ENCODE measurements at regions of chr6 and their contacts with region 1.

Region 1: GRCh38 chr6:53300656-53301551 is 47.8 kb downstream of the ELOVL5 start:
- DNase-seq: peak; percentile 43 to 68
- ATAC-seq: peak; percentile 66 to 76 (median 74)
- H3K4me3 ChIP-seq: no peak overlapping the region
- H3K4me3 Mint-ChIP-seq: peak overlapping the region; percentile 83
- H3K27ac ChIP-seq: peak overlapping the region; percentile 26
- H3K27ac Mint-ChIP-seq: peak overlapping the region; percentile 80 to 84
- H3K4me1 ChIP-seq: peaks cover 38% of the 10 kb centered on the region
- H3K4me1 Mint-ChIP-seq: peaks cover 73 to 75% of the 10 kb centered on the region in 2 donors
- H3K27me3 ChIP-seq: no peaks in the 10 kb centered on the region
- H3K27me3 Mint-ChIP-seq: no peaks in the 10 kb centered on the region
- CTCF ChIP-seq: no peak

Region 2: DNA sequence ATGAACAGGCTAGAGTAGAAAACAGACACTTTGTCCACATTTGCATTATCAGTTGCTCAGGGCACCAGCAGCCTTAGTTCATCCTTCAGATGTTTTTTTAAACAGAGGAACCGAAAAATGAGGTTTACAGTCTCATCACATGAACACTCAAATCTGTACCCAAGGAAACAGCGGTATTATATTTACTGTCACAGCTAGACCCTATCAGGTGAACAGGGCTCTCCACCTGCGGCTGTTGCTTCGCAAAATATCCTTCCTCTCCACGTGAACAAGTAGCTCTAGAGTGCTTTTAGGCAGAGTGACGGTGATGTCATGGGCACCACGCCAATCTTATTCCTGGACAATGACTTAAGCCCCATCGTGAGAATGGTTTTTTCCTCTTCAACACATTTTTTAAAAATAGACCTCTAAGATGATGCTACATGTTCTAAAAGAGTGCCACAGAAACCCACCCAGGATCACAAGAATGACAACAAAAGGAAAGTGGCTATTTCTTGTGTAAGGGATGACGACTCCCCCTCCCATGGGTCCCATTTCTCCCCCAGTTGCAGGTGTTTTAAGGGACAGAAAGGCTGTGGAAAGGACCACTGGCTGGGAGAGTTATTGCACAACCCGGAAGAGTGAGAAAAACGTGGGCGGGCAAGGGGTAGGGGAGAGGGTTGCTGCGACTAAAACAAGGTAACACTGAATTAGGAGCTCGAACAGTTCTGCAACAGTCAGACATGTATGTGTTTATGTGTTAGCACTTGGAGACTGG is 803.1 kb before region 1 on chr6:
- intact Hi-C with region 1: no loop called
- DNase-seq: no peak
- ATAC-seq: peak in 1 of 3 donors; percentile 33
- H3K4me3 ChIP-seq: no peak overlapping the region
- H3K4me3 Mint-ChIP-seq: no peak overlapping the region
- H3K27ac ChIP-seq: peak overlapping the region; percentile 75
- H3K27ac Mint-ChIP-seq: no peak overlapping the region
- H3K4me1 ChIP-seq: peaks cover 8% of the 10 kb centered on the region
- H3K4me1 Mint-ChIP-seq: peaks cover 11 to 13% of the 10 kb centered on the region in 2 donors
- H3K27me3 ChIP-seq: no peaks in the 10 kb centered on the region
- H3K27me3 Mint-ChIP-seq: no peaks in the 10 kb centered on the region
- CTCF ChIP-seq: no peak

Region 3: GRCh38 chr6:53313784-53314400 is 13.0 kb after region 1 on chr6:
- intact Hi-C with region 1: loop called (anchors 1 kb)
- DNase-seq: no peak
- ATAC-seq: no peak
- H3K4me3 ChIP-seq: no peak overlapping the region
- H3K4me3 Mint-ChIP-seq: peak overlapping the region; percentile 4
- H3K27ac ChIP-seq: no peak overlapping the region
- H3K27ac Mint-ChIP-seq: peak overlapping the region; percentile 60
- H3K4me1 ChIP-seq: peaks cover 40% of the 10 kb centered on the region
- H3K4me1 Mint-ChIP-seq: peaks cover 80 to 90% of the 10 kb centered on the region in 2 donors
- H3K27me3 ChIP-seq: no peaks in the 10 kb centered on the region
- H3K27me3 Mint-ChIP-seq: no peaks in the 10 kb centered on the region
- CTCF ChIP-seq: no peak

Region 4: DNA sequence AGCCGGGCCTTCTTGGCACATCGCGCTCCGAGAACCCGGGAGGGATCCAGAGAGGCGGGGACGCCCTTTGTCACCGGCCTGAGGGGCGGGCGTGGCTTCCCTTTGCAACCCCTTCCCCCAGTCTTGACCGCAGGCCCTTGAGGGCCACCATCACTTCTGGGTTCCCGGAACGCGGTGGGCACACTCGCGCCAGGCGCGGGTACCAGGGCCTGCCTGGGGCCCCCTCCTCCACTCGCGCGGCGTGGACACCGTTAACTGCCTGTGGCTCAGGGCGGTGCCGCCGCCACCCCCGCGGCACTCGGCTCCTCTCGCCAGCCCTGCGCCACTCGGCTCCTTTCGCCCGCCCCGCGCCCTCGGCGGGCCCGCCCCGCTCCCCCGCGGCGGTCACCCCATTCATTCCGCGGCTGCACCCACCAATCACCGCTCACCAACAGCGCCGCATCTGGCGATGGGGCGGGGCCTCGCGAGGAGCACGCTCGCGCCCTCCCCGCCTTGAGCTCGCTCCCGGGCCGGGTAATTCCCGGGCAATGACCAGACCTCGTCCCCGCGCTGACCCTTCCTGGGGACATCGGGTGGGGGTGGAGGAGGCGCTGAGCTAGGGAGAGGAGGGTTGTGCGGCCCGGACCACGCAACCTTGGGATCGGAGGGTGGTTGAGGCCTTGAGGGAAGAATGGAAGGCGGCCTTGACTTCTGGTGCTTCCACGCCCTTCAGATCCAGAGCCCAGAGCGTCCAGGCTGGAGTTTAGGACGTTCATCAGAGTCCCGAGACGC is 58.4 kb after region 1 on chr6:
- intact Hi-C with region 1: loop called (anchors 5 kb)
- DNase-seq: peak; percentile 92 to 94
- ATAC-seq: peak; percentile 87 to 96 (median 94)
- H3K4me3 ChIP-seq: peak overlapping the region; percentile 64
- H3K4me3 Mint-ChIP-seq: peak overlapping the region; percentile 93
- H3K27ac ChIP-seq: peak overlapping the region; percentile 95
- H3K27ac Mint-ChIP-seq: peak overlapping the region; percentile 97 to 99
- H3K4me1 ChIP-seq: peaks cover 29% of the 10 kb centered on the region
- H3K4me1 Mint-ChIP-seq: peaks cover 42 to 44% of the 10 kb centered on the region in 2 donors
- H3K27me3 ChIP-seq: no peaks in the 10 kb centered on the region
- H3K27me3 Mint-ChIP-seq: no peaks in the 10 kb centered on the region
- CTCF ChIP-seq: no peak